ENCODE measurements at regions of chr2 and their contacts with region 1.

Region 1: GRCh38 chr2:42095923-42096408 is 48.1 kb downstream of the PKDCC start:
- DNase-seq: peak; percentile 89
- ATAC-seq: peak; percentile 63

Region 2: GRCh38 chr2:42339191-42339912 is 243.4 kb after region 1 on chr2:
- intact Hi-C with region 1: loop called (anchors 5 kb)
- DNase-seq: no peak
- ATAC-seq: no peak